ENCODE measurements at regions of chr2 and their contacts with region 1.

Region 1: DNA sequence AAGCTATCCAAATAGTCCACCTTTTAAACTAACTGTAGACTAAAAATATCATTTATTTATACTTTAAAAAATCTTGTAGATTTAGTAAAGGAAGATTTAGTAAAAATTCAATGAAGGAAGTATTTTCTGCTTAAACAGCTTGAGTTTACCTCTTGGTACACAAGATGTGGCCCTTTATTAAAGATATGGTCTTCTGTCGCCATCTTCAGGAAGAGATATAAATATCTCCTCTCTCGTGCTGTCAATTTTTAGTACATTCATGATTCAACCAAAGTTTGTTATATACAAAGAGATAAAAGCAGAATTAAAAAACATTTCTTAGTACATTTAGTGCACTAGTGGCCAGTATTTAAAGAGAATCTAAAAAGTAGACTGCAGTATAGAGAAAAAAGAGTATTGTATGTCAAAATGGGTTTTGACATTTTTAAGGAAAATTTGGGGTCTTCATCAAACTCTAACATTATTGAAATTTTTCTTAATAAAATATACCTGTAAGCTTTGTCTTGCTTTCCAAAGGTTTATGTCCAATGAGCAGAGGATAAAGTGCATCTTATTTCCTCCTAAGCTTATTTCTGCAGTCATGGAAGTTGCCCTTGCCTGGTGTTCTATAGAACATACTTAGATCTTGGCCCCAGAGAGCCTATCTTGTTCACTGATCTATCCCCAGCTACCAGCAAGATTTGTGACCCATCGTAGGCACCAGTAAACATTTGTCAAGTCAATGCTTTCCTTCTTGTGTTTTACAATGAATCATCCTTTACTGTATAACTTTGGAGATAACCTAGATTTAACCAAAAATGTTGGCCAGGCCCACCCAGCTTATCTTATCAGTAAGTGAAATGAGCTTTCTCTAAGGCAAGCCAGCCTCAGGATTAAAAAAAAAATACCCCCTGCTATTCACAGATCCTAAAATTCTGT is 18.5 kb upstream of the EML6 start:
- DNase-seq: no peak
- ATAC-seq: peak; percentile 54
- H3K4me3 Mint-ChIP-seq: no peak overlapping the region
- H3K27ac Mint-ChIP-seq: no peak overlapping the region
- H3K4me1 Mint-ChIP-seq: peaks cover 15% of the 10 kb centered on the region
- H3K27me3 Mint-ChIP-seq: peaks cover 37% of the 10 kb centered on the region

Region 2: DNA sequence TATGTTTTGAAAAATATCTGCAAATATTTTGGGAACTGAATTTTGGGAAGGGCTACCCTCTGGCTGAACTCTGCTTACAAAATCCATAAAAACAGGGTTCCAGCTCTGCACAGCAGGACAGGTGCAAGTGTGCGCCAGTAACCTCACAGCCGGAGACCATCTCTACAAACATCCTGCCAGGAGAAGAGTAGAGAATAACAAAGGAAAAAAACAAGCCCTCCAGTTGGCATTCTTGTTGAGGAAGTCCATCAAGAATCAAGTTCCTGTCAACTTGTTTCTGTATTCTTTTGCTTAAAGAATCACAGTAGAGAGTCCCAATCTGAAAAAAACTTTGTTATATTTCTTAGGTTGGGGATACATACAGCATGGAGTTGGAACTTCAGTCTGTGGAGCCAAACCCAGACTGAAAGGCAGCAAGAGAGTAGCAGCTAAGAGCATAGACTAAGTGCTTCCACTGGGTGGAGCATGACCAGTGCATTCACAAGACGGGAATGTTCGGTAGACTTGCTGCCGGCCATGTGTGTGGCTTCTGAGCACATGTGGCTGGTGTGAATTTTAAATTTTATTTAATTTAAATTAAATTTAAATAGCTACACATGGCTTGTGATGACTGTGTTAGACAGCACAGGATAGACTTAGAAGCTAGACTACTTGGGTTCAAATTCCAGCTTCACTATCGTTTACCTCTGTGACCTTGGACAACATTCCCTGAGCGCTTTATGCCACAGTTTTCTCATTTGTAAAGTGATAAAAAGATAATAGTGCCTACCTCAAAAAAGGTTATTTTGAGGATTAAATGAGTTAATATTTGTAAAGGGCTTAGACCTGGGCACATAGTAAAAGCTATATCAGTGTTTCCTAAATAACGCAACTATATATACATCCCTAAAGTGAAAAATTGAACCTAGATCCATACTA is 206.9 kb before region 1 on chr2:
- CTCF ChIA-PET with region 1: interaction called, 14 read pairs
- POLR2A ChIA-PET with region 1: no interaction called
- DNase-seq: no peak
- ATAC-seq: no peak
- H3K4me3 Mint-ChIP-seq: no peak overlapping the region
- H3K27ac Mint-ChIP-seq: no peak overlapping the region
- H3K4me1 Mint-ChIP-seq: no peaks in the 10 kb centered on the region
- H3K27me3 Mint-ChIP-seq: peaks cover 23% of the 10 kb centered on the region

Region 3: GRCh38 chr2:54657664-54658083 is 47.3 kb before region 1 on chr2:
- CTCF ChIA-PET with region 1: interaction called, 51 read pairs
- POLR2A ChIA-PET with region 1: no interaction called
- DNase-seq: peak; percentile 43
- ATAC-seq: no peak
- H3K4me3 Mint-ChIP-seq: no peak overlapping the region
- H3K27ac Mint-ChIP-seq: peak overlapping the region; percentile 51
- H3K4me1 Mint-ChIP-seq: peaks cover 21% of the 10 kb centered on the region
- H3K27me3 Mint-ChIP-seq: no peaks in the 10 kb centered on the region

Region 4: GRCh38 chr2:54680397-54681041 is 24.4 kb before region 1 on chr2:
- CTCF ChIA-PET with region 1: interaction called, 29 read pairs
- POLR2A ChIA-PET with region 1: no interaction called
- DNase-seq: peak; percentile 50
- ATAC-seq: peak; percentile 75
- H3K4me3 Mint-ChIP-seq: peak overlapping the region; percentile 68
- H3K27ac Mint-ChIP-seq: peak overlapping the region; percentile 79
- H3K4me1 Mint-ChIP-seq: peaks cover 60% of the 10 kb centered on the region
- H3K27me3 Mint-ChIP-seq: peaks cover 20% of the 10 kb centered on the region

Region 5: DNA sequence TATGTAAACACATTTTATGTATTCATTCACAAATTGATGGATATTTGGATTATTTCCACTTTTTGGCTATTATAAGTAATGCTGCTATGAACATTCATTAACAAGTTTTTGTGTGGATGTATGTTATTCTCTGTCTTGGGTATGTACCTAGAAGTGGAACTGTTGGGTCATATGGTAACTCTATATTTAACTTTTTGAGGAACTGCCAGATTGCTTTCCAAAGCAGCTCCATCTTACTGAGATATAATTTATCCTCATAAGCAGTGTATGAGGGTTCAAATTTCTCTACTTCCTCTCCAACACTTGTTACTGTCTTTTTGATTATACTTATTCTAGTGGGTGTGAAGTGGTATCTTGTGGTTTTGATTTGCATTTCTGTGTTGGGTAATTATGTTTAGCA is 11.4 kb after region 1 on chr2:
- CTCF ChIA-PET with region 1: interaction called, 11 read pairs
- POLR2A ChIA-PET with region 1: no interaction called
- DNase-seq: no peak
- ATAC-seq: no peak
- H3K4me3 Mint-ChIP-seq: no peak overlapping the region
- H3K27ac Mint-ChIP-seq: no peak overlapping the region
- H3K4me1 Mint-ChIP-seq: no peaks in the 10 kb centered on the region
- H3K27me3 Mint-ChIP-seq: peaks cover 39% of the 10 kb centered on the region

Region 6: DNA sequence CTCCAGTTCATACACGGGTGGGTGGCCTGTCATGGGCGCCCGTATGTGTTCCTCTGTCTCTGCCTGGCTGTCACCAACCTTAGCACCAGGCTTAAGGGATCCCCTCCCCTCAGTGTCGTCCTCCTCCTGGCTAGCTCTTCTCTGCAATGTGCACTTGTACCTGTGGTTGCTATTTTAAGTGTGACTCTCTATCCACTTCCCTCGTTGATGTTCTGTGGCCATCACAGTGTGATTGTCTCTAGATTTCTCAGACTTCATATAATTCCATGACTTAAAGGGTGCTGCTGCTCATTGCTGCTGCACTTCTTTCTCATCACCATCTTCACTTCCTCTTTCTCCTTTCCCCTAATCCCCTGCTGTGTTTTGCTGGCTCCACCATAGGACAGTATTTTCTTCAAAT is 161.9 kb after region 1 on chr2:
- CTCF ChIA-PET with region 1: no interaction called
- POLR2A ChIA-PET with region 1: no interaction called
- DNase-seq: no peak
- ATAC-seq: peak; percentile 64
- H3K4me3 Mint-ChIP-seq: no peak overlapping the region
- H3K27ac Mint-ChIP-seq: no peak overlapping the region
- H3K4me1 Mint-ChIP-seq: peaks cover 13% of the 10 kb centered on the region
- H3K27me3 Mint-ChIP-seq: no peaks in the 10 kb centered on the region

Measured in activated CD8-positive, alpha-beta T cell treated with anti-CD3 and anti-CD28 coated beads, Interleukin-2, amount 10 ng/mL, durations not matched to agents 7 days and 5 days (primary cell).